ENCODE measurements at regions of chr4 and their contacts with region 1.

Region 1: GRCh38 chr4:48588230-48589097 is 98.4 kb downstream of the ZAR1 start:
- DNase-seq: no peak
- H3K4me3 ChIP-seq: no peak overlapping the region
- CTCF ChIP-seq: no peak
- POLR2A ChIP-seq: no peak

Region 2: DNA sequence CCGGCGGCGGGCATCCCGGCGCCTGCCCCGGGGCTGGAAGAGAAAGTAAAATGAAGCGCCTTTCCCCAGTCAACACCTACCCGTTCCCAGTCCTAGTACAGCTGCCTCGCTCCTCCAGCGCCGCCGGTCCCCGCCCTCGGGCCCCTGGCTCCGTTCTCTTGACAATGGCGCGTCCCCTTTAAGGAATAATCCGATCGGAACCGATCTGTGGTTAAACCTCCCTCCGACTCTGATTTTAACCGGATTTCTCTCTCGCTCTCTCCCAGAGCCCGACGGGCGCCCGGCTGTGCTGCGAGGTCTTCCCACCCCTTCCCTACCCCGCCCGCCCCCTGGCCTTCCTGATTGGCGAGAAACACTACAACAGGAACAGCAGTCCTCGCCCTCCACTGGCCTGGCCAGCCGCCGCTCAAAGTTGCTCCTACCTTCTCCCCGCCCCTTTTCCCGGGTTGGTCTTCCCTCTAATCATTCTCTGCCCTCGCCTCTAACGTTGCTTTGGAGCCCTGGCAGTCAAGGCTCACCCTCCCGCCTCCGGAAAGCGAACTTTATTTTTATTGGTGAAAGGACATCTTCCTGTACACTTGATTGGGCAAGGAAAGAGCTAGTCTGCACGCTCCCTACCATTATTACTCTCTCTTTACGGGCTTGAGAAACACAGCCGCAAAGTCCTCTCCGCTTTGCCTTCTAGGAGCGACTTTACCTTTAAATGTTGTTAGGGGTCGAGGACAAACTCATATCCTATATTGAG is 191.7 kb after region 1 on chr4 and contains the start of gene FRYL:
- intact Hi-C with region 1: loop called (anchors 10 kb)
- DNase-seq: peak; percentile 100
- H3K4me3 ChIP-seq: peak within 1 kb of the TSS; percentile 79
- CTCF ChIP-seq: no peak
- POLR2A ChIP-seq: peak in 1 of 2 donors; percentile 46
- total RNA-seq, gene FRYL: 51.1 to 96.5 (median 70.6) TPM

Measured in lower leg skin (tissue), 4 donors.